Gastrocnemius medialis (tissue), 4 donors: ENCODE measurements at regions of chr1 and their contacts with region 1.

Region 1: GRCh38 chr1:31548907-31549808 is 27.2 kb upstream of the TINAGL1 start:
- DNase-seq: peak; percentile 60 to 82
- ATAC-seq: peak; percentile 83 to 86
- H3K4me3 ChIP-seq: peak overlapping the region in 3 of 4 donors; percentile 8 to 31 (median 23)
- H3K27ac ChIP-seq: peak overlapping the region; percentile 65 to 79 (median 74)
- H3K4me1 ChIP-seq: peaks cover 14 to 16% of the 10 kb centered on the region in 2 donors
- H3K27me3 ChIP-seq: no peaks in the 10 kb centered on the region
- CTCF ChIP-seq: peak; percentile 87 to 96 (median 93)
- POLR2A ChIP-seq: no peak

Region 2: GRCh38 chr1:31460027-31460426 is 89.1 kb before region 1 on chr1:
- in situ Hi-C with region 1: no loop called
- intact Hi-C with region 1: loop called (anchors 5 kb)
- DNase-seq: no peak
- ATAC-seq: no peak
- H3K4me3 ChIP-seq: no peak overlapping the region
- H3K27ac ChIP-seq: no peak overlapping the region
- H3K4me1 ChIP-seq: no peaks in the 10 kb centered on the region
- H3K27me3 ChIP-seq: peaks cover 0 to 20% (median 4%) of the 10 kb centered on the region in 3 donors
- CTCF ChIP-seq: no peak
- POLR2A ChIP-seq: no peak